Panc1 (cell line): ENCODE measurements at regions of chr1 and their contacts with region 1.

Region 1: DNA sequence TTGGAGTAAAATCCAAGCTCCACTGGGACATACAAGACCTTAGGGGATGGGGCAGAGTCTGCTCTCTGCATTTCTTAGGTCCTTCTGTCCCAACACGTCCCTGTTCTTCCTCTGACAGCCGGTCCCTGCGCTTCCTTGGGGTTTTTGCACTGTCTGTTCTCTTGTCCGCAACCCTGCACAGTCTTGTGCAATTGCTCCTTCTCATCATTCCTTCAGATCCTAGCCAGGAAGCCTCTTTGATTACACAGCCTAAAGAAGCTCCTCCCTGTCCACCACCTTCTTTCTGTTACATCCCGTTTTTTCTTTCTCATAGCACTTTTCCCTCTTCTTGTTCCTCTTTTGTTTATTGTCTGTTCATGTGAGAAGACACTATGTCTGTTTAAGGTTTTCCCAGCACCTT is 19.9 kb downstream of the ACOT11 start:
- DNase-seq: no peak
- ATAC-seq: no peak
- H3K4me3 ChIP-seq: no peak overlapping the region
- H3K27ac ChIP-seq: no peak overlapping the region
- H3K4me1 ChIP-seq: no peaks in the 10 kb centered on the region
- H3K27me3 ChIP-seq: no peaks in the 10 kb centered on the region
- CTCF ChIP-seq: no peak

Region 2: DNA sequence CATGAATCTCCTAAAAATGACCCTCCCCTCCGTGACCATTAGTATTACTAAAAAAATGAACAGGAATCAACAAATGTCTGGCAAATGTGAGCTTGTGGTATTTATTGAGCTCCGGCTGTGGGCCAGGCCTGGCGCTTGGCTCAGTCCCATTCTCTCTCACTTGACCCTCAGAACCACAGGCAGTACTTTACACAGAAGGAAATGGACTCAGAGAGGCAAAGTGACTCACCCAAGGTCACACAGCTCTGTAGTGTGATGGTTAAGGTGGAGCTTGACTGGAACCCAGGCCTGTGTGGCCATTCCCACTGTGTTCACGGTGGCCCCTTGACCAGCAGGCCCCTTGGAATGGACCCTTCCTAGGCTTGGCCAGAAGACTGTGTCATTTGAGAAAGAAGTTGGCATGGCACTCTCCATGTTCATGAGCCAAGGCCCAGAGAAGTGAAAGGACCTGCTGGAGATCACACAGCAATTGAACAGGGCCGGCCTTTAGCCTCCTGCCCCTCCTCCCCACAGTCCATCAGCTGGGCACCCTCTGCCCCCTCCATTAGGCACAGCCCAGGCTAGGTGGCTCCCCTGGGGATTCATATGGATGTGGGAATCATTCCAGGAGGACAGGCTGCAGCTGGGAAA is 23.3 kb after region 1 on chr1:
- CTCF ChIA-PET with region 1: no interaction called
- POLR2A ChIA-PET with region 1: interaction called, 10 read pairs
- in situ Hi-C with region 1: no loop called
- intact Hi-C with region 1: no loop called
- DNase-seq: no peak
- ATAC-seq: no peak
- H3K4me3 ChIP-seq: no peak overlapping the region
- H3K27ac ChIP-seq: no peak overlapping the region
- H3K4me1 ChIP-seq: no peaks in the 10 kb centered on the region
- H3K27me3 ChIP-seq: no peaks in the 10 kb centered on the region
- CTCF ChIP-seq: no peak